HCT116 (cell line): ENCODE measurements at regions of chr1 and their contacts with region 1.

Region 1: GRCh38 chr1:32933742-32934322 is 30.8 kb downstream of the RNF19B start:
- DNase-seq: no peak
- ATAC-seq: peak; percentile 46
- H3K4me3 ChIP-seq: no peak overlapping the region
- H3K27ac ChIP-seq: peak overlapping the region; percentile 16
- H3K4me1 ChIP-seq: peaks cover 12 to 19% of the 10 kb centered on the region in 2 experiments; a peak in 3 of 4 replicates
- H3K27me3 ChIP-seq: no peaks in the 10 kb centered on the region
- CTCF ChIP-seq: no peak
- POLR2A ChIP-seq: no peak
- RAD21 ChIP-seq: no peak

Region 2: DNA sequence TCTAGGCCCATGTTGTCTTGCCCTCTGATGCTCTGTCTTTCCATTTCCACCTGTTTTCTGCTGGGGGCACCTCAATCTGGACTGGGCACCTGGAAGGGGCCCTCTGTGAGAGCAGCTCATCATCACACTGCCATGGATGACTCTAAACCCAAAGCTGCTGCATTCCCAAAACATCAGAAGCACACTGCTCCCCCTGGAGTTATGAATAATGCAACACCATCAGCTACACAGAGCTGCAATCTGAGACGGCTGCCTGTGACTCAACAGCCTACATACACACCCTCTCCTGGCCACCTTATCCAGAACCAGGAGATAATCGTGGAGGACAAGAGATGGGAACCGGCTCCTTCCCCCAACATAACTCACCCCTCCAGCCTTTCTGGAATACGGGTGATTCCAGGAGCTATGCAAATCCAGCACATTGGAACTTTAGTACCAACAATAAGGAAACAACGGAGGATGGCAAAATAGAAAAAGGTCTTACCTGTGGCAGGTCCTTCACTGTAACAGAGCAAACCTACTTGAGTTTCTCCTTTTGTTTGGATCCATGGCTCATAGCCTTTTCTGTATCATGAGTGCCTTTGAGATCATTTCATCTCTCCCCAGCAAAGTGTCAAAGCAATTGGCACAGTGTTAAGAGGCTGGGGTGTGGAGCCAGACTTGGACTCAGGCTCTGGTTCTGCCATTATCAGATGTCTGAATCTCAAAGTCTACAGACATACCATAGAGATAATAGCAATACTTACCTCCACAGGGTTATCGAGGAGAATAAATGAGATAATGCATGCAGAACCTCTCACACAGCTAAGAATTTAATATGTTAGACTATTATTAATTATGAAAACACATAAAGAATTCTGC is 73.6 kb after region 1 on chr1:
- CTCF ChIA-PET with region 1: interaction called, 41 read pairs
- POLR2A ChIA-PET with region 1: no interaction called
- RAD21 ChIA-PET with region 1: interaction called, 5 to 10 read pairs
- intact Hi-C with region 1: loop called (anchors 1 kb)
- DNase-seq: peak; percentile 57
- ATAC-seq: peak; percentile 99
- H3K4me3 ChIP-seq: no peak overlapping the region
- H3K27ac ChIP-seq: no peak overlapping the region
- H3K4me1 ChIP-seq: peaks cover 7 to 23% of the 10 kb centered on the region in 2 experiments
- H3K27me3 ChIP-seq: no peaks in the 10 kb centered on the region
- CTCF ChIP-seq: peak; percentile 57 to 76 (median 66); a peak in 5 of 6 replicates
- POLR2A ChIP-seq: no peak
- RAD21 ChIP-seq: peak; percentile 83

Region 3: GRCh38 chr1:33111970-33112369 is 178.1 kb after region 1 on chr1:
- CTCF ChIA-PET with region 1: no interaction called
- POLR2A ChIA-PET with region 1: no interaction called
- RAD21 ChIA-PET with region 1: no interaction called
- intact Hi-C with region 1: no loop called
- DNase-seq: no peak
- ATAC-seq: peak; percentile 69
- H3K4me3 ChIP-seq: no peak overlapping the region
- H3K27ac ChIP-seq: no peak overlapping the region
- H3K4me1 ChIP-seq: no peaks in the 10 kb centered on the region
- H3K27me3 ChIP-seq: no peaks in the 10 kb centered on the region
- CTCF ChIP-seq: peak; percentile 28 to 47 (median 35); a peak in 4 of 6 replicates
- POLR2A ChIP-seq: no peak
- RAD21 ChIP-seq: peak; percentile 68